ENCODE measurements at regions of chr5 and their contacts with region 1.

Region 1: DNA sequence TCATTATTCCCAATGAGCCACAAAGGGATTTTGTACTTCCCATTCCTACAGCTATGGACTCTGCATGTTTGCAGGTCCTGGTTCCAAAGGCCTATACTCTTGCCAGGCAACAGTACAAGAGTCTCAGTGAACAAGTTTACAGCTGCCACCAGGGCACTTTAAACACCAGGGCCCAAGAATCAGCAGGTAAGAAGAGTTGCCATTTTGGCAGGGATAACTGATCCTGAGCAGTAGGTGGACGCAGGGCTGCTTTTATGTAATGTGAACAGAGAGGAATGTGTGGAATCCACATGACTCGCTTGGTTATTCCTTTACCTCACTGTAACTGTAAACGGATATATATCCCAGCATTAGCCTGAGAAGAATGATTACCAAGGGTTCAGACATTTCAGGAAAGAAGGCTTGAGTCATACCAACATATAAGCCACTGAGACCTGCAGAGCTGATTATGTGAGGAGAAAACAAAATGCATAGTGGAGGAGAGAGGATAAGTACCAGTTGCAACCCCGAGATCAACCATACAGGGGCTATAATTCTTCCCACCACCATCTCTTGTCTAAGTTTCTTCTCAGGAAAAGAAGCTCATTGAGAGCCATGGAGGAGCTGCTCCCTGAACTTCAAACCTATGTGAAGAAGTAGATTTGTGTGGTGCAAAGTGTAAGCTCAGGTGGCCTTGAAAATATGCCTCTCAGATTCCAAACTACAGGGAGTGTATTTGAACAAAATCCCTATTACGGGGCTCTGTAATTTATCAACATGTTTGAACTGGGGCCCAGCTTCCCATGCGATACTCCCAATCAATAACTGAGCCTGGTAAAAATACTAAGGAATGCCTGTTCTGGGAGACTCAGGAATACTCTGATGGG is 24.6 kb downstream of the RAPGEF6 start:
- DNase-seq: peak; percentile 86
- ATAC-seq: peak; percentile 81
- H3K4me3 ChIP-seq: peak overlapping the region in 2 of 3 experiments; percentile 17 to 30; a peak in 3 of 6 replicates
- H3K27ac ChIP-seq: peak overlapping the region; percentile 94
- H3K4me1 ChIP-seq: peaks cover 73% of the 10 kb centered on the region
- H3K27me3 ChIP-seq: no peaks in the 10 kb centered on the region
- CTCF ChIP-seq: no peak
- EP300 ChIP-seq: peak in 1 of 2 experiments; percentile 85; a peak in 2 of 4 replicates
- POLR2A ChIP-seq: no peak
- RAD21 ChIP-seq: no peak

Region 2: GRCh38 chr5:131589510-131590348 is 20.7 kb before region 1 on chr5:
- CTCF ChIA-PET with region 1: no interaction called
- POLR2A ChIA-PET with region 1: interaction called, 11 read pairs
- in situ Hi-C with region 1: no loop called
- intact Hi-C with region 1: no loop called
- DNase-seq: peak; percentile 60
- ATAC-seq: peak; percentile 86
- H3K4me3 ChIP-seq: no peak overlapping the region
- H3K27ac ChIP-seq: no peak overlapping the region
- H3K4me1 ChIP-seq: peaks cover 15% of the 10 kb centered on the region; the same call in 1 of the 2 replicates
- H3K27me3 ChIP-seq: no peaks in the 10 kb centered on the region
- CTCF ChIP-seq: peak; percentile 87
- EP300 ChIP-seq: no peak
- POLR2A ChIP-seq: no peak
- RAD21 ChIP-seq: peak; percentile 87

Measured in HepG2 (cell line).